Mammary epithelial cell (primary cell): ENCODE measurements at regions of chr22 and their contacts with region 1.

Region 1: GRCh38 chr22:44782363-44782963 is 30.1 kb downstream of the ARHGAP8 start:
- DNase-seq: no peak
- H3K4me3 ChIP-seq: no peak overlapping the region
- H3K27ac ChIP-seq: no peak overlapping the region
- H3K4me1 ChIP-seq: peaks cover 8% of the 10 kb centered on the region
- H3K27me3 ChIP-seq: no peaks in the 10 kb centered on the region
- CTCF ChIP-seq: no peak

Region 2: DNA sequence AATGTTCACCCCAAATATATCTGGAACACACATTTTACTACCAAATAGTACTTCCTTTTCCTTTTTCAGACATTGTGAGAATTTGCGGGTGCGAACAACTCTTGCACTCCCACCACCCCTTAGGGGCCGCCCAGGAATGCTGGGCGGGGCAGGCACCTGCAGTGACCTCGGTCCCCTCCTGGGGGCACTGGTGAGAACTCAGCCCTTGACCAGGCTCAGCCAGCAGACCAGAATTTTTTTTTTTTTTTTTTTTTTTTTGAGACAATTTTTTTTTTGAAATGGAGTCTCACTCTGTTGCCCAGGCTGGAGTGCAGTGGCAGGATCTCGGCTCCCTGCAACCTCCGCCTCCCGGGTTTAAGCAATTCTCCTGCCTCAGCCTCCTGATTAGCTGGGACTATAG is 45.7 kb after region 1 on chr22:
- CTCF ChIA-PET with region 1: no interaction called
- dilution Hi-C with region 1: loop called (anchors 5 kb)
- in situ Hi-C with region 1: no loop called
- intact Hi-C with region 1: no loop called
- DNase-seq: no peak
- H3K4me3 ChIP-seq: no peak overlapping the region
- H3K27ac ChIP-seq: no peak overlapping the region
- H3K4me1 ChIP-seq: no peaks in the 10 kb centered on the region
- H3K27me3 ChIP-seq: no peaks in the 10 kb centered on the region
- CTCF ChIP-seq: peak; percentile 26 to 50

Region 3: GRCh38 chr22:44889258-44889878 is 106.9 kb after region 1 on chr22:
- CTCF ChIA-PET with region 1: no interaction called
- dilution Hi-C with region 1: no loop called
- in situ Hi-C with region 1: no loop called
- intact Hi-C with region 1: no loop called
- DNase-seq: no peak
- H3K4me3 ChIP-seq: no peak overlapping the region
- H3K27ac ChIP-seq: no peak overlapping the region
- H3K4me1 ChIP-seq: no peaks in the 10 kb centered on the region
- H3K27me3 ChIP-seq: no peaks in the 10 kb centered on the region
- CTCF ChIP-seq: no peak